Heart left ventricle (tissue), 16 donors: ENCODE measurements at regions of chr3 and their contacts with region 1.

Region 1: GRCh38 chr3:139935016-139935865 is at the start of gene CLSTN2:
- DNase-seq: peak; percentile 58 to 85 (median 77)
- ATAC-seq: peak; percentile 55 to 92 (median 86)
- H3K4me3 ChIP-seq: peak within 1 kb of the TSS; percentile 39 to 76 (median 56)
- H3K27ac ChIP-seq: peak within 1 kb of the TSS in 3 of 12 donors; percentile 22 to 37 (median 29)
- H3K4me1 ChIP-seq: peaks cover 0 to 31% (median 12%) of the 10 kb centered on the region in 12 donors
- H3K27me3 ChIP-seq: peaks cover 0 to 50% (median 4%) of the 10 kb centered on the region in 9 donors
- CTCF ChIP-seq: peak in 2 of 12 donors; percentile 12 to 18
- POLR2A ChIP-seq: peak in 1 of 2 donors; percentile 61
- total RNA-seq, gene CLSTN2: 2.0 to 7.6 (median 3.9) TPM

Region 2: DNA sequence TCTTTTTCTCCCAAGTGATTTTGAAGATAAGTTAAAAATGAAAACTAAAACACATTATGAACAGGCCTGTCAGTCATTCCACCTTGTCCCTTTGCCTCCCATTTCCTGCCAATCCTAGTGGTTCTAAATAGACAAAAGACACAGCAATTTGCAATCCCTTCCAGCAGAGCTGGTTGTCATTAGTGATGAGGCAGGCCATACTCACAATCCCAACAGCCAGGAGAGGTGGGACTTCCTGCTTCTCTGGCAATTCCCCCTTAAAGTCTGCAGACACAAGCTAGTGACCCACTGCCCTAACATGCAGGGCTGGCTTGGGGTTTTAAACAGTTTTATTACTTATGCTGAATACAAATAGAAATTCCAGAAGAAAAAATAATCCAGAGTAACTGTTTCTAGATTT is 357.3 kb before region 1 on chr3:
- intact Hi-C with region 1: loop called in 3 of 10 experiments (anchors 5 to 10 kb)
- DNase-seq: no peak
- ATAC-seq: no peak
- H3K4me3 ChIP-seq: no peak overlapping the region
- H3K27ac ChIP-seq: no peak overlapping the region
- H3K4me1 ChIP-seq: peaks cover 2 to 20% (median 14%) of the 10 kb centered on the region in 12 donors
- H3K27me3 ChIP-seq: no peaks in the 10 kb centered on the region
- CTCF ChIP-seq: no peak
- POLR2A ChIP-seq: no peak

Region 3: DNA sequence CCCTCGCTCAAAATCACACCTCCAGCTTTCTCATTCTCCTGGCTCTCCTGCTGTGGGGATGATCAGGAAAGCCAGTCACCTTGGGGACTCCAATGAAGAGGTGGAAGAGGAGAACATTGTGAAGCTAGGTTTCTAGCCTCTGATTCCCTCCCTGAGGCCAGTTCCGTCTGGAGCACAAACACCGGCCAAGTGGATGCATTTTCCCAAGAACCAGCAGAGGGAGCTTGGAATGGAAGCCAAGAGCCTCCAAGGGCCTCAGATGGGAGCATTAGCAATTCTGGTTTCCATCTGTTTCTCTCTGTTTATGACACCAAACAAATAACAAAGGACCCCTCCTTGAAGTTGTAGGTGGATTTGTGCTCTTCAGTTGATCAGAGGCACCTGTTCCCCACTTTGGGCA is 216.8 kb before region 1 on chr3:
- intact Hi-C with region 1: loop called in 9 of 10 experiments (anchors 1 to 10 kb)
- DNase-seq: peak in 4 of 5 donors; percentile 26 to 57 (median 40)
- ATAC-seq: peak; percentile 37 to 79 (median 66)
- H3K4me3 ChIP-seq: no peak overlapping the region
- H3K27ac ChIP-seq: no peak overlapping the region
- H3K4me1 ChIP-seq: no peaks in the 10 kb centered on the region
- H3K27me3 ChIP-seq: peaks cover 0 to 3% (median 0%) of the 10 kb centered on the region in 9 donors
- CTCF ChIP-seq: peak; percentile 32 to 65 (median 51)
- POLR2A ChIP-seq: no peak

Region 4: GRCh38 chr3:139975594-139976365 is 40.5 kb after region 1 on chr3:
- intact Hi-C with region 1: loop called in 3 of 10 experiments (anchors 2 to 5 kb)
- DNase-seq: peak in 4 of 5 donors; percentile 23 to 67 (median 46)
- ATAC-seq: peak; percentile 83 to 94 (median 94)
- H3K4me3 ChIP-seq: no peak overlapping the region
- H3K27ac ChIP-seq: peak overlapping the region in 6 of 12 donors; percentile 7 to 58 (median 36)
- H3K4me1 ChIP-seq: peaks cover 0 to 21% (median 6%) of the 10 kb centered on the region in 12 donors
- H3K27me3 ChIP-seq: no peaks in the 10 kb centered on the region
- CTCF ChIP-seq: peak in 2 of 12 donors; percentile 12 to 24
- POLR2A ChIP-seq: no peak

Region 5: DNA sequence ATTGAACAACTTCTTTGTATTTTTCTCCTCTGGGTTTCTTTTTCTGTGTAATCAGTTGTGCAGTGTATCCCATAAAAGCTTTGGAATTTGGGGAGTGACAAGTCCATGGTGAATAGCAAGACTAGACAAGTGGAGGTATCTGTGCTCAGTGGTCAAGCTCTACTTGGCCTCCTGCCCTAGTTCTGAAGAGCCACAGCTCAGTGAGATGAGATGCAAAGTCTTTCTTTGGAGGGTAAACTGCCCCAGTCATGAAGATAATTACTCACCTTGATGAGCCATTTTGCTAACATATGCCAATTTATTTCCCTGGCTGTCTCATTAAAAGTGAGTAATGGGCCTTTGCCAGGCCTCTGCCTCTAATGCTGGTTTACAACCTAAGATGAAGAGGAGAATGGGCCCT is 471.4 kb after region 1 on chr3:
- intact Hi-C with region 1: no loop called
- DNase-seq: no peak
- ATAC-seq: no peak
- H3K4me3 ChIP-seq: no peak overlapping the region
- H3K27ac ChIP-seq: no peak overlapping the region
- H3K4me1 ChIP-seq: no peaks in the 10 kb centered on the region
- H3K27me3 ChIP-seq: no peaks in the 10 kb centered on the region
- CTCF ChIP-seq: no peak
- POLR2A ChIP-seq: no peak

Region 6: GRCh38 chr3:140499114-140499757 is 564.0 kb after region 1 on chr3:
- intact Hi-C with region 1: loop called in 1 of 10 experiments (anchors 10 kb)
- DNase-seq: no peak
- ATAC-seq: peak in 2 of 4 donors; percentile 42 to 54
- H3K4me3 ChIP-seq: no peak overlapping the region
- H3K27ac ChIP-seq: no peak overlapping the region
- H3K4me1 ChIP-seq: peaks cover 0 to 13% (median 0%) of the 10 kb centered on the region in 12 donors
- H3K27me3 ChIP-seq: peaks cover 0 to 12% (median 0%) of the 10 kb centered on the region in 9 donors
- CTCF ChIP-seq: peak in 11 of 12 donors; percentile 8 to 58 (median 40)
- POLR2A ChIP-seq: no peak

Region 7: DNA sequence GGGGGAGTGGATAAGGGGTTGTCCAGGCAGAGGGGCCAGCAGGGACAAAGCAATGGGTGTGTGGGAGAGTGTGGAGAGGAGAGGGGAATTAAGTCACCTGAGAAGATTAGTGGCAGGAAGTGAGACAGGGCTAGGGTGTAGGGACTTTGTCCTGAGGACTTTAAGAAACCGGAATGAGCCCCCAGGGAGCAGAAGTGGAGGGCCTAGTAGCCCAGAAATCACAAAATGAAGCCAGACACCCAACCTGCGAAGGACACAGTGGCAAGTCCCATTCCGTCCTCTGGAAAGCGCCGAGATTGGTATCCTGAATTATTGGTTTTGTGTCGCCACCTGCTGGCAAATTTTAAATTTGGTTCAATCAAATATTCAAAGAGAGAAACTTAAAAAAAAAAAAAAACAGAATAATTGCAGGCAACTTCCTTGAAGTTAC is 928.4 kb after region 1 on chr3:
- intact Hi-C with region 1: loop called in 3 of 10 experiments (anchors 5 to 10 kb)
- DNase-seq: peak in 3 of 5 donors; percentile 27 to 38 (median 35)
- ATAC-seq: peak in 2 of 4 donors; percentile 30 to 49
- H3K4me3 ChIP-seq: no peak overlapping the region
- H3K27ac ChIP-seq: no peak overlapping the region
- H3K4me1 ChIP-seq: no peaks in the 10 kb centered on the region
- H3K27me3 ChIP-seq: peaks cover 0 to 3% (median 0%) of the 10 kb centered on the region in 9 donors
- CTCF ChIP-seq: peak; percentile 37 to 67 (median 52)
- POLR2A ChIP-seq: no peak